Activated CD8-positive, alpha-beta memory T cell treated with anti-CD3 and anti-CD28 coated beads, Interleukin-2, amount 10 ng/mL, durations not matched to agents 7 days and 5 days (primary cell): ENCODE measurements at regions of chr4 and their contacts with region 1.

Region 1: GRCh38 chr4:40309250-40309774 is 25.8 kb upstream of the CHRNA9 start:
- DNase-seq: peak; percentile 96
- ATAC-seq: peak; percentile 75
- H3K4me3 Mint-ChIP-seq: peak overlapping the region; percentile 75
- H3K27ac Mint-ChIP-seq: peak overlapping the region; percentile 99
- H3K4me1 Mint-ChIP-seq: peaks cover 75% of the 10 kb centered on the region
- H3K27me3 Mint-ChIP-seq: no peaks in the 10 kb centered on the region

Region 2: GRCh38 chr4:40056716-40057585 is 252.4 kb before region 1 on chr4 and contains the start of gene N4BP2:
- CTCF ChIA-PET with region 1: interaction called, 42 read pairs
- DNase-seq: peak; percentile 81
- ATAC-seq: peak; percentile 65
- H3K4me3 Mint-ChIP-seq: peak within 1 kb of the TSS; percentile 98
- H3K27ac Mint-ChIP-seq: peak within 1 kb of the TSS; percentile 99
- H3K4me1 Mint-ChIP-seq: peaks cover 32% of the 10 kb centered on the region
- H3K27me3 Mint-ChIP-seq: peaks cover 5% of the 10 kb centered on the region
- total RNA-seq, gene N4BP2: 26.5 to 28.4 TPM

Region 3: GRCh38 chr4:40199999-40200874 is 109.1 kb before region 1 on chr4:
- CTCF ChIA-PET with region 1: interaction called, 32 read pairs
- DNase-seq: peak; percentile 94
- ATAC-seq: peak; percentile 52
- H3K4me3 Mint-ChIP-seq: peak overlapping the region; percentile 98
- H3K27ac Mint-ChIP-seq: peak overlapping the region; percentile 99
- H3K4me1 Mint-ChIP-seq: peaks cover 51% of the 10 kb centered on the region
- H3K27me3 Mint-ChIP-seq: no peaks in the 10 kb centered on the region

Region 4: GRCh38 chr4:40212674-40213527 is 96.4 kb before region 1 on chr4:
- CTCF ChIA-PET with region 1: interaction called, 11 read pairs
- DNase-seq: peak; percentile 45
- ATAC-seq: peak; percentile 22
- H3K4me3 Mint-ChIP-seq: peak overlapping the region; percentile 75
- H3K27ac Mint-ChIP-seq: peak overlapping the region; percentile 89
- H3K4me1 Mint-ChIP-seq: peaks cover 85% of the 10 kb centered on the region
- H3K27me3 Mint-ChIP-seq: no peaks in the 10 kb centered on the region

Region 5: DNA sequence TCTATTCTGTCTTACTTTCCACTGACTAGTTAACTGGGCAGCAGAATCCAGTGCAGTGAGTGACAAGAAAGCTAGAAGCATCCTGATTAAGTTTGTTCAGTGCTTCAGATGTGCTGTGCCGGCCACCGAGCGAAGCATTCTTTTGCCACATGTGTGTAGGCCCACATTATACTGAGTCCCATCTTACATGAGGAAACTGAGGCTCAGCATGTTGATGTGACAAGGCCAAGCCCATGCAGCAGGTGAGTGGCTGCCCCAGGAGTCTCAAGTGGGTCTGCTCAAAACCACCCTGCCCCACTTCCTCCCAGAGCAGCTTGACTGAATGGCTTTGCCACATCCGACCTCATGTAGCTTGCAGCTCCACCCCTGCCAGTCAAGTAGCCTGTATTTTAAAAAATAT is 62.0 kb before region 1 on chr4:
- CTCF ChIA-PET with region 1: interaction called, 28 read pairs
- DNase-seq: peak; percentile 91
- ATAC-seq: peak; percentile 65
- H3K4me3 Mint-ChIP-seq: peak overlapping the region; percentile 30
- H3K27ac Mint-ChIP-seq: peak overlapping the region; percentile 91
- H3K4me1 Mint-ChIP-seq: peaks cover 86% of the 10 kb centered on the region
- H3K27me3 Mint-ChIP-seq: no peaks in the 10 kb centered on the region

Region 6: DNA sequence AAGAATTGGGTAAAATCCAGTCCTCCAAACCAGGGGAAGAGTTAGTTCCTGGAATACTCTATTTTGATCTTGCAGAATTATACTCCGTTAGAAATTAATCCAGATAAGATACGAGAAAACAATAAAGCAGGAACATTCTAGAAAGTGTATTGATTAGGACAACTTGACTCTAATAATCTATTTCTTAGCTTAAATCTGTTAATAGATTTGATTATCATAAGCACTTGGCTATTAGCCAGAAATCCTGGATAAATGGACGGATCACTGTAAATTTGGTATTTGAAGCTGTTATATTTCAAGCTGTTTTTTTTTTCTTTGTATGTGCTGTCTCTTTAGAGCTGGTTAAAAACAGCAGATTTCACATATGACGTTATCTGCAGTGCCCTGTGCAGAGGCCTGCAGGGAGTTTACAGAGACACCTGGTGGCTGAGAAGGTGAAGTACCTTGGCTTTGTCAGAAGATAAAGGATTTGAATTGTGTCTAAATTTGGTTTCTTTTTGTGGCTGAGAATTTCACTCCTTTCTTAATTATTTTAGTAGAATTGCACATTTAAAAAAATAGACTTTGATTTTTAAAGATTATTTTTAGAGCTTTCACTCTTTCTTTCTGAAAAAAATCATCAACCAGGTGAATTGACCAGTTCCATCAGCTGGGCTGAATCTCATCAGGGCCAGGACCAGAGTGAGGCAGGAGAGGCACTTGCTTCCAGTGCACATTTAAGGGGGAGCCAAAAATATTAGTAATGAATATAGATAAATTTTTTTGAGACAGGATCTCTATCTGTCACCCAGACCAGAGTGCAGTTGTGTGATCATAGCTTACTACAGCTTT is 16.1 kb after region 1 on chr4:
- CTCF ChIA-PET with region 1: interaction called, 10 read pairs
- DNase-seq: peak; percentile 82
- ATAC-seq: peak; percentile 97
- H3K4me3 Mint-ChIP-seq: no peak overlapping the region
- H3K27ac Mint-ChIP-seq: no peak overlapping the region
- H3K4me1 Mint-ChIP-seq: peaks cover 25% of the 10 kb centered on the region
- H3K27me3 Mint-ChIP-seq: peaks cover 2% of the 10 kb centered on the region

Region 7: GRCh38 chr4:40369437-40370274 is 60.3 kb after region 1 on chr4:
- CTCF ChIA-PET with region 1: no interaction called
- DNase-seq: no peak
- ATAC-seq: no peak
- H3K4me3 Mint-ChIP-seq: no peak overlapping the region
- H3K27ac Mint-ChIP-seq: no peak overlapping the region
- H3K4me1 Mint-ChIP-seq: peaks cover 3% of the 10 kb centered on the region
- H3K27me3 Mint-ChIP-seq: no peaks in the 10 kb centered on the region

Region 8: GRCh38 chr4:40395908-40396793 is 86.8 kb after region 1 on chr4:
- CTCF ChIA-PET with region 1: no interaction called
- DNase-seq: no peak
- ATAC-seq: no peak
- H3K4me3 Mint-ChIP-seq: no peak overlapping the region
- H3K27ac Mint-ChIP-seq: no peak overlapping the region
- H3K4me1 Mint-ChIP-seq: no peaks in the 10 kb centered on the region
- H3K27me3 Mint-ChIP-seq: peaks cover 3% of the 10 kb centered on the region